ENCODE measurements at regions of chr17 and their contacts with region 1.

Region 1: DNA sequence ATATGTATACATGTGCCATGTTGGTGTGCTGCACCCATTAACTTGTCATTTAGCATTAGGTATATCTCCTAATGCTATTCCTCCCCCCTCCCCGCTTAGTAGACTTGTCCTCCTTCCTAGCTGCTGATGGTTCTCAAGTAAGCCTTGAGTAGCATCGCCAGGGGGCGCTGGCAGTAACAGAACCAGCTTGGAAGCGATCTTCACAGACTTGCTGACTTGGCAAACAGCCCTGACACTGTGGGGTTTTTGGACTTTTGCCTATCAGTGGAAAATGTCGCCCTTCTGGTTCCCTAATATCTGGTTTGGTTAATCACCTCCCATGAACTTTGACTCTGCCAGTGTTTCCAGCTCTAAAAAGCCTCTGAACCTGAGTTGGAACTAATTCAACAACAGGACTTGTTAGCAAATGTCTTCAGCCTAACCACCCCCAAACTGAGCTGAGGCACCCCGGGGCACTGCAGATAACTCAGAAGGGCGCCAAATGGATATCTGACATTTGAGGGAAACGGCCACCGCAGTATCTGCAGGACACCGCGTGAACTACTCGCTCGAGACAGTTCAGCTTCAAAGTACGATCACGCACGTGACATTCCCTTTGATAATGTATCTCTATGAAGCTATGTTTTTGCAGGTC is 15.4 kb upstream of the SPATA32 start:
- DNase-seq: peak; percentile 94
- ATAC-seq: peak; percentile 98
- H3K4me3 Mint-ChIP-seq: no peak overlapping the region
- H3K27ac Mint-ChIP-seq: peak overlapping the region; percentile 54
- H3K4me1 Mint-ChIP-seq: peaks cover 15% of the 10 kb centered on the region
- H3K27me3 Mint-ChIP-seq: no peaks in the 10 kb centered on the region

Region 2: GRCh38 chr17:45031231-45032173 is 245.8 kb before region 1 on chr17:
- CTCF ChIA-PET with region 1: no interaction called
- DNase-seq: peak; percentile 47
- ATAC-seq: peak; percentile 39
- H3K4me3 Mint-ChIP-seq: no peak overlapping the region
- H3K27ac Mint-ChIP-seq: peak overlapping the region; percentile 64
- H3K4me1 Mint-ChIP-seq: peaks cover 24% of the 10 kb centered on the region
- H3K27me3 Mint-ChIP-seq: no peaks in the 10 kb centered on the region

Region 3: GRCh38 chr17:45073414-45074070 is 203.8 kb before region 1 on chr17:
- CTCF ChIA-PET with region 1: no interaction called
- DNase-seq: no peak
- ATAC-seq: no peak
- H3K4me3 Mint-ChIP-seq: no peak overlapping the region
- H3K27ac Mint-ChIP-seq: no peak overlapping the region
- H3K4me1 Mint-ChIP-seq: peaks cover 20% of the 10 kb centered on the region
- H3K27me3 Mint-ChIP-seq: no peaks in the 10 kb centered on the region

Region 4: GRCh38 chr17:45235416-45236281 is 41.7 kb before region 1 on chr17:
- CTCF ChIA-PET with region 1: interaction called, 10 read pairs
- DNase-seq: peak; percentile 82
- ATAC-seq: peak; percentile 60
- H3K4me3 Mint-ChIP-seq: no peak overlapping the region
- H3K27ac Mint-ChIP-seq: peak overlapping the region; percentile 69
- H3K4me1 Mint-ChIP-seq: peaks cover 58% of the 10 kb centered on the region
- H3K27me3 Mint-ChIP-seq: no peaks in the 10 kb centered on the region

Region 5: GRCh38 chr17:45261577-45262515 is 15.5 kb before region 1 on chr17 and contains the start of gene SPATA32:
- CTCF ChIA-PET with region 1: interaction called, 22 read pairs
- DNase-seq: peak; percentile 88
- ATAC-seq: peak; percentile 91
- H3K4me3 Mint-ChIP-seq: peak within 1 kb of the TSS; percentile 74
- H3K27ac Mint-ChIP-seq: peak within 1 kb of the TSS; percentile 83
- H3K4me1 Mint-ChIP-seq: peaks cover 26% of the 10 kb centered on the region
- H3K27me3 Mint-ChIP-seq: no peaks in the 10 kb centered on the region
- total RNA-seq, gene SPATA32: 0.23 to 0.49 TPM

Region 6: DNA sequence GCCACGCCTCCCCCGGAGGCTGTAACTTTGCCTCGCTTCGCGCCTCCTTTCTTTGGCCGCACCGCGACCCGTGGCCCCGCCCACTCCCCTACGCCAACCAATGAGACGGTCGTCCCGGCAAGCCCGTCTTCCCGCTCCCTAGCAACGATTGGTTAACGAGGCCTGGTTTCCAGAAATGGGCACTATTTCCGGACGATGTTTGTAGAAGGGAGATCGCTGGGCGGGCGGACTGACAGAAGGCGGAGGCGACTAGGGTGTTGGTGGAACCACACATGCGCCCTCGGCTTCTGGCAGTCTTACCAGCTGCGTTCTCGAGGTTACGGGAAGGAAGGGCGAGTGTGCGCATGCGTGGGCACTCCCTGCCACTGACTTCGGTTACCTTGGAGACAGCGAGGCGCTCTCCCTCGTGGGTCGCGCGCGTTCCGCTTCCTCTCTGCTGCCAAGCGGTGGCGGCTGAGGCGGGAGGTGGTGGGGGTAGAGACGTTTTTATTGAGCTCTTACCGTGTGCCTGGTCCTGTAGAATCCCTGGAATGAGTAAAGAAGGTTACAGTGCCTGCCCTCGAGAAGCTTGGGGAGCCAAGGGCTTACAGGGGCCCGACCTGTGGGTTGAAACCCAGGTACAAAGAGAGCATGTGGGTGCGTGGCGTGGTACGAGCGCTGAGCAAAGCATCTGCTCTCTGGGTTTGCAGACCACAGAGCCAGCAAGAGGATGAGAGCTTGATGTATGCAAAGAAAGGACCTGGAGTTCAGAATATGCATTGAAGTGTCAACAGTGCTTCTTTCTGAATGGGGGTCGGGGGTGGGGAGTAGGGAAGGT is 40.0 kb after region 1 on chr17:
- CTCF ChIA-PET with region 1: interaction called, 144 read pairs
- DNase-seq: peak; percentile 100
- ATAC-seq: peak; percentile 84
- H3K4me3 Mint-ChIP-seq: peak overlapping the region; percentile 81
- H3K27ac Mint-ChIP-seq: peak overlapping the region; percentile 85
- H3K4me1 Mint-ChIP-seq: peaks cover 66% of the 10 kb centered on the region
- H3K27me3 Mint-ChIP-seq: no peaks in the 10 kb centered on the region

Region 7: DNA sequence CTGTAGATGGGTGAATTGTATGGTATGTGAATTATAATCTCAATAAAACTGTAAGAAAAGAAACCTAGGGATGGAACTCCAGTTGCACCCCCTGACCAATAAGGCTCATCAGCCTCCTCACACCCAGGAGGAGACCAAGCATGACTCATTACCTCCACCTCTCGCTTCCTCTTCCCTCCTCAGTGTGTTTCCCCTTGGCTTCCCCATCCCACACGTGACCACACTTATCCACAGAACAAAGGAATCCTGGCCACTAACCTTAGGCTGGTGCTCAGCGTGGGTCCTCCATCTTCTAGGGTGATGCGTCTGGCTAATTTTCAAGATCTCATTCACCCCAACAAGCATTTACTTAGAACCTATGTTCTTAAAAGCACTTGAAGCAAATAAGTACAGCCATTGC is 75.7 kb after region 1 on chr17:
- CTCF ChIA-PET with region 1: no interaction called
- DNase-seq: no peak
- ATAC-seq: peak; percentile 65
- H3K4me3 Mint-ChIP-seq: no peak overlapping the region
- H3K27ac Mint-ChIP-seq: no peak overlapping the region
- H3K4me1 Mint-ChIP-seq: peaks cover 16% of the 10 kb centered on the region
- H3K27me3 Mint-ChIP-seq: peaks cover 29% of the 10 kb centered on the region